ENCODE measurements at regions of chr2 and their contacts with region 1.

Region 1: DNA sequence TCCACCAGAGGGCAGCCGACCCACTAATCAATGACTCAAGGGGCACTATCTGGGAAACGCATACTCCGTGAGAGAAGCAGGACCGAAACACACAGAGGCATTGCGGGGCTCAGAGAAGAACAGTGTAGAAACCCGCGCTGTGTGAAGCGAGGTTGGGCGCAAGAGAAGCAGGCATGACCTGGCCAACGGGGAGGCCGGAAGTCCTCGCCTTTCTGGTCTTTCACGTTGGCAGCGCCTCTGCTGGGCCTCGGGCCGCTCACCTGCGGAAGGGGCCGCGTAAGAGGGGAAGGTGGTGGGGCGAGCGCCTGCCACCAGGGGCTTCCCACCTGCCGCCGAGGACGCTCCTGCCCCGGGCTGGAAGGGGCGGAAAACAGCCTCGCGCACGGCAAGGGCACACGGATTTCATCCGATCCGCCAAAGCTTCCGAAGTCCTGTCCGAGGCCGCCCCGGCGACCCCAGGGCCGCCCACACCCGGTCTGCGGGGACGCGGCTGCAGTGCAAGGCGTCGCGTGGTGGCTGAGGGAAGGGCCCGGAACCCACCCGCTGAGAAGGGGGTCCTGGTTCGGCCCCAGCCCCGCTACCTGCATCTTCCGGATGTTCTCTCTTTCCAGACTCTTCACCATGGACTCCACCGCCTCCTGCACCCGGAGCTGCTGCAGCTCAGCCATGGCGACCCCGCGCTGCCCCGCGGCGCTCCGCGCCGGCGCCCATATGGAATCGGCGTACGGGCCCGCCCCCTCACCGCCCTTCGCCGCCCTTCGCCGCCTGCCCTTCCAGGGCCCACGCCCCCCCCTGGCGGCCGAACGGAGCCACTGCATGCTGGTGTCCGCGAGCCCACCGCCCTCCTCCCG is at the start of gene FAM136A:
- DNase-seq: peak; percentile 92
- H3K4me3 Mint-ChIP-seq: peak within 1 kb of the TSS; percentile 93
- H3K27ac Mint-ChIP-seq: peak within 1 kb of the TSS; percentile 94
- H3K4me1 Mint-ChIP-seq: peaks cover 38% of the 10 kb centered on the region
- H3K27me3 Mint-ChIP-seq: no peaks in the 10 kb centered on the region
- total RNA-seq, gene FAM136A: 41.9 to 44.0 TPM

Region 2: DNA sequence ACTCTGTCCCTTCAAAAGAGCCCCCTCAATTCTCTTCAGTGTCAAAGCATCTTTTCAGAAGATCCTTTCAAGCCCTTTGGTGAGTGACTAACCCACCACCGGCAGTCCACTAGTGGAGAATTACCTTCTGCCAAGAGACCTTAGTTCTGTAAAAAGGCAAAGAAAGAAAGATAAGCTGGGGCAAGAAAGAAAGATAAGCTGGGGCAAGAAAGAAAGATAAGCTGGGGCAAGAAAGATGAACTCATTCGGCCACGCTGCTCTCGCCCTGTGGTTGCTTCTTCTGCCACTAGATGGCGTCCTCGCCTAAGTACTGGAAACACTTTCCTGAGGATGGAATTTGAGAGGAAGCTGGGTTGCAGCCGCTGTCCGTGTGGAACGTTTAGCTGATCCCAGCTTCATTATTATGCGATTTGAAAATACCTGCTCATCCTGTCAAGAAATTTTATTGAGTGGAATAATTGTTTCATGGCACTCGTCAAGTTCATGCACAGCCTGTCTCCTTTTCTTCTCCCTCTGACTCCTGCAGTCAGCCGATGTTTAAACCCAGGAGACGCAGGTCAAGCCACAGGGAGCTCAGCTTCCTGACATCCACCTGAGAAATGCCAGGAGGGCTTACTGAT is 576.9 kb before region 1 on chr2:
- CTCF ChIA-PET with region 1: no interaction called
- intact Hi-C with region 1: loop called (anchors 1 kb)
- DNase-seq: peak; percentile 95
- H3K4me3 Mint-ChIP-seq: peak overlapping the region; percentile 61
- H3K27ac Mint-ChIP-seq: no peak overlapping the region
- H3K4me1 Mint-ChIP-seq: no peaks in the 10 kb centered on the region
- H3K27me3 Mint-ChIP-seq: no peaks in the 10 kb centered on the region

Region 3: DNA sequence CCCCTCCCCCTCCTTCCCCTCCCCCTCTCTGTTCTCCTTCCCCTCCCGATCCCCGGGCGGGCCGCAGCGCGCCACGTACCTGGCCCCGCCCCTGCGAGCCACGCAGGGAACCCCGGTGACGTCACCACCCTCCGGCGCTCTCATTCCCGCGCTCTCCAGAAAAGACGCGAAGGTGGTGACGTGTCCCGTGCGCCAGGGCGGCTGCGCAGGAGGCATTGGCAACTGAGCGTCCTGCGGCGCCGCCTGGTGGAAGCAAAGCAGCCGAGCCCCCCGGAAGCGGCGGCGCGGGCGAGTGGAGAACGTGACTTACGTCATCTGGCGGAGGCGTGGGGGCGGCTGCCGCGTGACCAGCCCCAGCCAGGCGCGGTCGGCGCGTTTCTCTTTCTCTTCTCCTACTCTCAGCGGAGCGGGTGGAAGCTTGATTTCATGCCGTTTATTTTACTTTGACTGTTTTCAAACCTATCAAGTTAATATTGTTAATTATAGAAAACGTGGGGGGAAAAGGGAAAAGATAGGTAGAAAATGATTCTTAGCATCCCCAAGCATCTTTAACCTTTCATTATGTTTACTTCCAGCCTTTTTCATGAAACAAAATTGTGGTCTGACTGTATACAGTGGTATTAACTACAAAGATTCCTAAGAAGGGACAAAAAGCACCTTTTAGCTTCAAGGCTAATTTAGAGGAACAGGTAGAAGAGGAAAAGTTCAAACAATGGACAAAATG is 158.8 kb before region 1 on chr2:
- CTCF ChIA-PET with region 1: no interaction called
- intact Hi-C with region 1: loop called (anchors 1 kb)
- DNase-seq: peak; percentile 100
- H3K4me3 Mint-ChIP-seq: peak overlapping the region; percentile 93
- H3K27ac Mint-ChIP-seq: peak overlapping the region; percentile 99
- H3K4me1 Mint-ChIP-seq: peaks cover 53% of the 10 kb centered on the region
- H3K27me3 Mint-ChIP-seq: no peaks in the 10 kb centered on the region

Region 4: DNA sequence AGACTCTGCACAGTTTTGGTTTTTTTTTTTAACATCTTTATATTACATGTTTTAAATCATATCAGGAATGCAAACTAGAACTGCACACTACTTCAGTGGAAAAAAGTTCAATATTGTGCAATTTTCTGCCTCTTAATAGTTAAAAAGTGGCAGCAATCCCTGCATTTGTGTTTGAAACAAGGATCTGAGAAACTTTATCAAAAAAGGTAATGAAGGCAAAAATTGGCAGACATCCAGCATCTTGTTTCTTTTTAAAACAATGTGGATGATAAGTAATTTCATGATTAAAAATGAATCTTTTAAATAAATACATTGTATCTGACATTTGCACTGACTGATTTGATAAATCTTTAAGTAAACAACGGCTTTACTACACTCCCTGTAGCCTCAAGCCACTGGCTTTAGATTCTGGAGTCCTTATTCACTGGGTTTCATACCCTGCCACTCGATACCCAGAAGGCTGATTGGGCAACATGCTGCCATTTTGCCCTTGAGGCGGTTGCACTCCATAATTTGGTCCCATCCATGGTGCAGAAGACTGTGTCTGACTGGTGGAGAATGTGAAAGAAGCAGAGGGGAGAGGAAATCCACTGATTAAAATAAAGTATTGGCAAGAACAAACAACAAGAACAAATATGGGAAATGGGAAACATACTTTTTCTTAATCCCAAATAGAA is 89.1 kb before region 1 on chr2:
- CTCF ChIA-PET with region 1: no interaction called
- intact Hi-C with region 1: no loop called
- DNase-seq: no peak
- H3K4me3 Mint-ChIP-seq: no peak overlapping the region
- H3K27ac Mint-ChIP-seq: no peak overlapping the region
- H3K4me1 Mint-ChIP-seq: peaks cover 25% of the 10 kb centered on the region
- H3K27me3 Mint-ChIP-seq: no peaks in the 10 kb centered on the region

Region 5: GRCh38 chr2:70312560-70312959 is 11.0 kb after region 1 on chr2:
- CTCF ChIA-PET with region 1: interaction called, 21 read pairs
- intact Hi-C with region 1: no loop called
- DNase-seq: no peak
- H3K4me3 Mint-ChIP-seq: no peak overlapping the region
- H3K27ac Mint-ChIP-seq: no peak overlapping the region
- H3K4me1 Mint-ChIP-seq: no peaks in the 10 kb centered on the region
- H3K27me3 Mint-ChIP-seq: no peaks in the 10 kb centered on the region

Region 6: DNA sequence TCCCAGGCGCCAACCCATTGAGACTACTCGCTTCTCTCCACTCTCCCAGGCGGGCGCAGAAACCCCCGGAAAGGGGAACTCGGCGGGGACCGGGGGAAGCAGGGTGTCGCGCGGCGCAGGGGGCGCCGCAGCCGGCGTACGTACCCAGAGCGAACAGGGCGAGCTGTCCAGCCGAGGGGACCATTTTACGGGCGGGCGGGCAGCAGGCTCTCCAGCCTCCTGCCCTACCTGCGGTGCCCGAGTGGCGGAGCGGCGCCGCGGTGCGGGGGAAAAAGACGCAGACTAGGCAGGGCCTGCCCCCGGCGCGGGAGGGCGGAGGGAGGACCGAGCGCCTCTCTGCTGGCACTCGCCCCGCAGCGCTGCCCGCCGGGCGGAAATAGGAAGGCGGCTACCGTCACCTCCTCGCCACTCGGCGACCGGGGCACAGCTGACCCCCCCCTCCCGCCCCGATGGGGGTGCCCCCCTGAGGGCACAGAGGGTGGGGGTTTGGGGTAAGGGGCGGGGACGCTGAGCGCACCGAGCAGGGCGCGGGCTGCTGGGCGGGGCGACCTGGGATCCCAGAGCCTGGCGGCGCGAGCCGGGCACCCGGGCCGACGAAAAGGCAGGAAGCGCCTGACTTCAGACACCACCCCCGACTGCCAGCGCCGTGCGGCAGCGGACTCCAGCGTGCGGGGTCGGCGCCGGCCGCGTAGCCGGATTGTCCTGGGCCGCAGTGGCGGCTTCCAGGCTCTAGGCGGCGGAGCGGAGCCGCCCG is 252.2 kb after region 1 on chr2 and contains the start of gene TGFA:
- CTCF ChIA-PET with region 1: interaction called, 7 read pairs
- intact Hi-C with region 1: loop called (anchors 1 kb)
- DNase-seq: peak; percentile 77
- H3K4me3 Mint-ChIP-seq: peak within 1 kb of the TSS; percentile 78
- H3K27ac Mint-ChIP-seq: peak within 1 kb of the TSS; percentile 23
- H3K4me1 Mint-ChIP-seq: peaks cover 14% of the 10 kb centered on the region
- H3K27me3 Mint-ChIP-seq: peaks cover 11% of the 10 kb centered on the region
- total RNA-seq, gene TGFA: 0.33 to 0.64 TPM

Region 7: DNA sequence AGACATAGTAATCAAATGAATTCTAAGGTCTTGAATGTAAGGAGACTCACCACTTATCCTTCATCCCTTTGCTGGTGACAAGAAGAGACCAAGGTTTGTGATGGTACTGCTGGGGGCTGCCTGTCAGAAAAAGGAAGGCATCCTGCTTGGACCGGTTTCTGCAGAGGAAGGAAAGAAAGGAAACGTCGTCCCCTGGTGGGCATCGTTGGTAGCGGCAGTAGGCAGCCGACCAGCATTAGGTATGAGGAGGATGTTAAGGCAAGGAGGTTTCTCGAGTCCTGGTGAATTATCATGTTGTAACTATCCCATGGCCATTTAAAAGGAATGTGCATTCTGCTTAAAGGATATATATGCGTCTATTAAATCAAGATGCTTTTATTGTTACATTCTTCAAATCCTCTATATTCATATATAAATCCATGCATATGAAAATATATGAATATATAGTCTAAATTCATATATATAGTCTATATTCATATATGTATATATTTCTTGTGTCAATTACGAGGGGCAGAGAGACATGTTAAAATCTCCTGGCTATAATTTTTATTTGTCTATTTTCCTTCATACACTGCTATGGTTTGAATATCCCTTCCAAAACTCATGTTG is 346.4 kb after region 1 on chr2:
- CTCF ChIA-PET with region 1: interaction called, 121 read pairs
- intact Hi-C with region 1: loop called (anchors 1 kb)
- DNase-seq: peak; percentile 88
- H3K4me3 Mint-ChIP-seq: no peak overlapping the region
- H3K27ac Mint-ChIP-seq: no peak overlapping the region
- H3K4me1 Mint-ChIP-seq: no peaks in the 10 kb centered on the region
- H3K27me3 Mint-ChIP-seq: no peaks in the 10 kb centered on the region

Region 8: DNA sequence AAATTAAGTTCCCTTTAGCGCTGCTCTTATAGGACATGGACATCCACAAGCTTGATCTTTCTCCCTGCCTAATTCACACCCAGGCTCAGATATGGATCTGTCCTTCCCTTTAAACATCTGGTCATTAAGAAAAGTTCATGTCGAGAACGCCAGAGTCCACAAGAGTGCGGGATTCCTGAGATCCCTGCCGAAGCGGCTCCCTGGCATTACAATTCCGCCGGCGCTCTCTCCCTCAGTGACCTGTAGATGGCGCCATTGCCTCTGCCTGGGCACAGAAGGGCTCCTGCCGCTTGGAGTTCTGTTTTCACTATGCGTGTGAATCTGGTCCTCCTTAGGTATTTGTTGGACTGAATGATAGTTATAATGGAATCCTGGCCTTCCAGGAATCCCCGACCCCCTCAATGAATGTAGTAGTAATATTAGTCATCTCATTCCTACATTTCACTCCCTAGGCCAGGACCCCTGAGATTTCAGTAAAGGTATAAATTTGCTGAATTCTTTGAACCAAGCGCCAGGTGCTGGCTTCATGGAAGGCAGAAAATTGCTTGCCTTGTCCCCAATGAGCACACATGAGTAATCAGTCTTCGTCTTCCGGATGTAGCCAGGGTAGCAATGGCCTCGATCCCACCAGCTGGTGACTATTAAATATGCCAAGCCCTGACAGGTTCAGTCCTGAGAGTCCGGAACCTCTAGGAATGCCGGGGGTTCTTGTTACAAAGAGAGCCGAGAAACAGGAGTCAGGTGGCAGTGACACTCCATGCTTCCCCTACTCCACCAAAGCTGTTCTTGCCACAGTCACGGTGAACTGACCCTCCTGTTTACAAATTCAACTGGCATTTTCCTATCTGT is 560.4 kb after region 1 on chr2:
- CTCF ChIA-PET with region 1: no interaction called
- intact Hi-C with region 1: loop called (anchors 10 kb)
- DNase-seq: peak; percentile 87
- H3K4me3 Mint-ChIP-seq: no peak overlapping the region
- H3K27ac Mint-ChIP-seq: no peak overlapping the region
- H3K4me1 Mint-ChIP-seq: peaks cover 2% of the 10 kb centered on the region
- H3K27me3 Mint-ChIP-seq: peaks cover 12% of the 10 kb centered on the region